ENCODE measurements at regions of chr1 and their contacts with region 1.

Region 1: GRCh38 chr1:46527474-46528296 is 23.8 kb downstream of the KNCN start:
- DNase-seq: peak; percentile 84 to 87
- H3K4me3 ChIP-seq: no peak overlapping the region
- H3K27ac ChIP-seq: no peak overlapping the region
- H3K4me1 ChIP-seq: peaks cover 0 to 8% (median under 1%) of the 10 kb centered on the region in 4 donors
- H3K27me3 ChIP-seq: peaks cover 0 to 51% of the 10 kb centered on the region in 2 donors
- CTCF ChIP-seq: peak; percentile 88 to 93

Region 2: DNA sequence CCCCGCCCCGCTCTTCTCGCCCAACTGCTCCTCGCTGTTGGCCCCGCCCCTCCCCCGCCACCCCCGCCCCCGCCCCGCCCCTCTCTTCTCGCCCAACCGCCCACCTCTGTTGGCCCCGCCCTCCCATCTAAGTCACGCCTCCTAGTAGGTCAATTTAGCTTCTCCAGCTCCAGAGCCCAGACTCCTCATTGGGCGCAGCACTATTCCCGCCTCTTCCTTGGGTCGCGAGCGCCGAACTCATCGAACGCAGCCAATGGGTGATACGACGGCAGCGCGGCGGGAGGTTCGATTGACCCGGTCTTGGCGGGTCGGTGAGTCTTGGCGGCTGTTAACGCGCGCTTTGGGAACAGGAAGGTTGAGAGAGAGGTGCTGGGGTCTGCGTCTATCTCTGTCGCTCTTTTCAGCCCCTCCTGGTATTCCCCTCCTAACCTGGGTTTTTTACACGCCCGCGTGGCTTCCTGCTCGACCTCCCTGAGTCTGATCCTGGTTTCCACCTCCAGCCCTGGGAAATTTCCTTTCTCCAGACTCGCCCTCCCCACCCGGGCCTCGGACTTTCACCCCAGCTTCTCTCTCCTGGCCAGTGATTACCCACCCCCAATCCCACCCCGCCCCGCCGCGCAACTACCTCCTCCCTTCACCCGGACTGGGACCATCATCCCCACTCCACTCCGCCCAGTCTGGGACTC is 280.1 kb before region 1 on chr1 and contains the start of gene RAD54L:
- intact Hi-C with region 1: no loop called
- DNase-seq: peak; percentile 98
- H3K4me3 ChIP-seq: peak within 1 kb of the TSS; percentile 58 to 74
- H3K27ac ChIP-seq: peak within 1 kb of the TSS; percentile 45 to 61
- H3K4me1 ChIP-seq: peaks cover 0 to 15% (median 12%) of the 10 kb centered on the region in 4 donors
- H3K27me3 ChIP-seq: no peaks in the 10 kb centered on the region
- CTCF ChIP-seq: no peak

Region 3: DNA sequence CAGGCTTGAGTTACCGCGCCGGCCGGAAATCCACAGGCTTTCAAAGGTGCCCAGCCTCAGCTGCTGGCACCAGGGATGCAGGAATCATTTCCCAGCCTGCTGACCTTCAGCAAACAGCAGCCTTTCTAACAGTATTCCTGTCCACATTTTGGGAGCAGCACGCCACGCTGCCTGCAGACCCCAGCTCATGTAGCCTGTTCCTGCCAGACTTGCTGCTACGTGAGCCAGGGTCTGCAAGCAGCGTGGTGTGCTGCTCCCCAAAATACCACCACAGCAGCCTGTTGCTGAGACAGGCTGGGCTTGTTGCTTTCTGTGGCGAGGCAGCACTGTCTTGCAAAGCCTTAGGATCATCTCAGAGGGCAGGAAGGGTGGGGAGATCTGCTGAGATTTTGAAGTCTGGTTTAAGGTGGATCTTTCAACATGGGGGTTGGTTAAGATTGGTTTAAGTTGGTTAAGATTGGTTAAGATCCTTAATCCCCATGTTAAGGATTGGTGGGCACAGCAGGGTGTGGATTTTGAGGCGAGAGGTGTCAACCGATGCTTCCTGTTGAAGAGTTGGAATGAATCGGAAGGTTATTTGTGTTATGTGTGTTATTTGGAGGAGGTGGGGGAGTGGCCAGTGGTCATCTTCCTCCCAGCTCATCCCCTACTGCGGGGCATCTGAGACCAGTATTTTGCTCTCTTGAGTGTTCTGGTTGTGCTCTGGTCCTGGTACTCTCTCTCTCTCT is 120.6 kb before region 1 on chr1:
- intact Hi-C with region 1: loop called (anchors 1 kb)
- DNase-seq: no peak
- H3K4me3 ChIP-seq: peak overlapping the region; percentile 30 to 31
- H3K27ac ChIP-seq: no peak overlapping the region
- H3K4me1 ChIP-seq: peaks cover 0 to 20% (median 10%) of the 10 kb centered on the region in 4 donors
- H3K27me3 ChIP-seq: no peaks in the 10 kb centered on the region
- CTCF ChIP-seq: no peak

Region 4: GRCh38 chr1:46446646-46447498 is 80.8 kb before region 1 on chr1:
- intact Hi-C with region 1: loop called (anchors 2 kb)
- DNase-seq: peak; percentile 81
- H3K4me3 ChIP-seq: no peak overlapping the region
- H3K27ac ChIP-seq: no peak overlapping the region
- H3K4me1 ChIP-seq: peaks cover 0 to 22% (median 14%) of the 10 kb centered on the region in 4 donors
- H3K27me3 ChIP-seq: peaks cover 0 to 64% of the 10 kb centered on the region in 2 donors
- CTCF ChIP-seq: peak; percentile 67 to 79

Region 5: DNA sequence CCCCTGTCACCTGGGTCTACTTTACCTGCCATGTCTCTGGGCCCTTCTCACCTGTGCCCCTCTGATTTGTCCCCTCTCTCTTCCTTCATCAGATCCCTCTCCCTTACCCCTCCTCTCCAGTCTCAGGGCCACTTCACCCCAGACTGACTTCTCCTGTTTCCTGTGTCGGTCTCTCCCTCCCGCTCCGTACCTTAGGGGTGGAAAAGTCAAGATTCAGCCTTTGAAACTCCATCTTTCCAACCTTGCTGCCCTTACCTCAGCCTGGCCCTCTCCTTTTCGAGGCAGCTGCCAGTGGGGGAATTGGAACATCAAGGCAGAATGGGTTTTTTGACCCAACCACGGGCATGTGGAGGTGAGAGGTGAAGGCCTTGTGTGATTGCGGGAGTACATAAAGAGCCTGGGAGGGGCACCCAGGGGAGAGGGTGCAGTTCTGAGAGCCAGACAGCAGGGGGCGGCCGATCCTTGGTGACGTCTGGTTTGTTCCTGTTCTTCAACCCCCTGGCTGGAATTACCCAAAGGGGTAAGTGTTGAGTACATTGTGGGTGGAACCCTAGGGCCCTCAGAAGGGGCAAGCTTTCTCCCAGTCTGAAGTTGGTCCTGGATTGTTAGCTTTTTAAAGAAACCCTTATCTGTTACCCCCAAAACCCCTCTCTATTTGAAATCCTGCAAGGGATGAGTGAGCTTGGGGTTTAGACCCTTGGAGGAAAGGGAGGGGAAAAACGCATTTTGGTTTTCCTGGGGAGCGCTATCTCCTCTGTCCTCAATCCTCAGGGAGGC is 50.3 kb before region 1 on chr1:
- intact Hi-C with region 1: loop called (anchors 5 kb)
- DNase-seq: peak; percentile 67 to 76
- H3K4me3 ChIP-seq: no peak overlapping the region
- H3K27ac ChIP-seq: no peak overlapping the region
- H3K4me1 ChIP-seq: no peaks in the 10 kb centered on the region
- H3K27me3 ChIP-seq: peaks cover 0 to 78% of the 10 kb centered on the region in 2 donors
- CTCF ChIP-seq: peak; percentile 74 to 85

Region 6: DNA sequence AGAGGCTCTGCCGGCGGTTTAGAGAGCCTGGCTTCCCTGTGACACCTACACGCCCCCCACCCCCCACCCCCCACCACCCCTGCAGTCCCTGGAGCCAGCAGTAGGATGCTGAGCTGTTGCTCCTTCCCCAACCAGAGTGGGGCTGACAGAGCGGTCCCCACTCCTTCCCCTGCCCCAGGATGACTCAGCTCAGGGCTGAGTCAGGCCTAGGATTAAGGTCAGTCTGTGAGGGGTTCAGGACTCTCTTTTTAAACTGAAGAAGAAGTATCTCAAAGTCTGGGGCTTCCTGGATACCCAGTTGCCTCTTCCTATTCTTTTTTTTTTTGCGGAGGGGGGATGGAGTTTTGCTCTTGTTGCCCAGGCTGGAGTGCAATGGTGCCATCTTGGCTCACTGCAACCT is 18.9 kb before region 1 on chr1:
- intact Hi-C with region 1: no loop called
- DNase-seq: no peak
- H3K4me3 ChIP-seq: no peak overlapping the region
- H3K27ac ChIP-seq: no peak overlapping the region
- H3K4me1 ChIP-seq: no peaks in the 10 kb centered on the region
- H3K27me3 ChIP-seq: peaks cover 0 to 28% of the 10 kb centered on the region in 2 donors
- CTCF ChIP-seq: no peak

Region 7: DNA sequence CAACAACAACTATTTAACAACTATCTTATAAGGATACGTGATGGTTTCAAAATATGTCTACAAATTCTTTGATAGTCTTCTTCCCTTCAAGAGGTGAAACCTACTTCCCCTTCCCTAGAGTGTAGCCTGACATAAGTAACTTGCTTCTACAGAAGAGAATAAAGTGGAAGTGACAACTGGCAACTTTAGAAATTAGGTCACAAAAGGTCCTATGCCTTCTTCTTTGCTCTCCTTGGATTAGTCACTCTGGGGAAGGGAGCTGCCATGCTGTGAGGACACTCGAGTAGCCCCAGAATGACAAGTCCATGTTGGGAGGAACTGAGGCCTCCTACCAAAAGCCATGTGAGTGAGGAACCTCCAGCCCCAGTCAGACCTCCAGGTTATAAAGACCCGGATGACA is 172.0 kb after region 1 on chr1:
- intact Hi-C with region 1: no loop called
- DNase-seq: no peak
- H3K4me3 ChIP-seq: no peak overlapping the region
- H3K27ac ChIP-seq: no peak overlapping the region
- H3K4me1 ChIP-seq: no peaks in the 10 kb centered on the region
- H3K27me3 ChIP-seq: no peaks in the 10 kb centered on the region
- CTCF ChIP-seq: no peak

Region 8: DNA sequence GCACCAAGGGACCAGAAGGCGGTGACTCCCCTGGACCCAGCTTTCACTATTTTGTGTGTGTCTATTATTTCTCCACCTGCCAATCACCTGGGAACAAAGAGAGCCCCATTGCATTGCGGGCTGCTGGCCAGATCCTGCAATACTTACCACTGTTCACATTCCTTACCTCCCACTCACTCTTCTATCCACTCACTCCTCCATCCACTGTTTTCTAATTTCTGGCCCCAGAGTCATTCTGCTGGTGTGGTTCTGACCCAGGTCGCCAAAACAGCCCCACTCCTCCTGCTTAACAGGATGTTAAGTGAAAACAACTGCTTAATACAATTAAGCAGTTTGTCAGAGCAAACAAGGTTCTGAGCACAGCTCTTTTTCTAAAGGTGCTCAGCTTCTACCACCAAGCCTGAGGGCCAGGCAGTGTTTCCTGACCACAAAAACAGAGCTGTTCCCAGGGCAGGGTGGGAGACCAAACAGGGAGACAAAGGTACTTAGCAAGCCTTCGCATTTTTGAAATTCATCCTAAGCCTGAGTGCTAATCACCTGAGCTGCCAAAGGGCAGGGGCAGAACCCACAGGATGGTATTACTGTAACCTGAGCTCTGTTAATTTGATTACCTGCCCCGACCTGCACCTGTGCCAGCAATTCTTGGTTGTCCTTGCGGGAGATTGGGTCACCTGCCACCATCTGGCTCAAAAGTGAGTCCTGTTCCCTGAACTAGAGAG is 229.7 kb after region 1 on chr1:
- intact Hi-C with region 1: no loop called
- DNase-seq: no peak
- H3K4me3 ChIP-seq: no peak overlapping the region
- H3K27ac ChIP-seq: no peak overlapping the region
- H3K4me1 ChIP-seq: peaks cover 0 to 5% (median 0%) of the 10 kb centered on the region in 4 donors
- H3K27me3 ChIP-seq: peaks cover 0 to 16% of the 10 kb centered on the region in 2 donors
- CTCF ChIP-seq: no peak